ENCODE measurements at regions of chr11 and their contacts with region 1.

Region 1: DNA sequence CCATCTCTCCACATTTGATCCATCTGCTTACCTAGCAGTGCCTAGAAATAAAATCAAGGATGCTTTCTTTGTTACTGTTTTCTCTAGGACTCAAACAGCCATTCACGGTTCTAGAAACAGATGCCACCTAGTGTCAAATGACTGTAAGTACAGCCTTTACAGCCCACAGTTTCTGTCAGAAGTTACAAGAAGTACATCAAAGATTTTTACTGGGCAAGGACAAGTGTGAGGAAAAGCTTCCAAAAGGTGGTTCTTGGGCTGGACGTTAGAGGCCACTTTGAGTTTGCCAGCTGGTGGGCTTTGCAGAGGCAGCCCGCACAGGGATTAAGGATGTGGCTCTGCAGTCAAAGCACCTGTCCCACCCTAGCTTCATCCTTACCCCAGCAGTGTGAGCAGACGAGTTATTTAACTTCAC is 6.9 kb downstream of the KMT5B start:
- DNase-seq: no peak
- H3K4me3 ChIP-seq: no peak overlapping the region
- H3K27ac ChIP-seq: peak overlapping the region in 3 of 4 donors; percentile 23 to 57 (median 51)
- H3K4me1 ChIP-seq: peaks cover 55 to 95% (median 87%) of the 10 kb centered on the region in 4 donors
- H3K27me3 ChIP-seq: no peaks in the 10 kb centered on the region
- CTCF ChIP-seq: peak; percentile 81 to 87 (median 82)
- EP300 ChIP-seq: no peak
- POLR2A ChIP-seq: no peak

Region 2: DNA sequence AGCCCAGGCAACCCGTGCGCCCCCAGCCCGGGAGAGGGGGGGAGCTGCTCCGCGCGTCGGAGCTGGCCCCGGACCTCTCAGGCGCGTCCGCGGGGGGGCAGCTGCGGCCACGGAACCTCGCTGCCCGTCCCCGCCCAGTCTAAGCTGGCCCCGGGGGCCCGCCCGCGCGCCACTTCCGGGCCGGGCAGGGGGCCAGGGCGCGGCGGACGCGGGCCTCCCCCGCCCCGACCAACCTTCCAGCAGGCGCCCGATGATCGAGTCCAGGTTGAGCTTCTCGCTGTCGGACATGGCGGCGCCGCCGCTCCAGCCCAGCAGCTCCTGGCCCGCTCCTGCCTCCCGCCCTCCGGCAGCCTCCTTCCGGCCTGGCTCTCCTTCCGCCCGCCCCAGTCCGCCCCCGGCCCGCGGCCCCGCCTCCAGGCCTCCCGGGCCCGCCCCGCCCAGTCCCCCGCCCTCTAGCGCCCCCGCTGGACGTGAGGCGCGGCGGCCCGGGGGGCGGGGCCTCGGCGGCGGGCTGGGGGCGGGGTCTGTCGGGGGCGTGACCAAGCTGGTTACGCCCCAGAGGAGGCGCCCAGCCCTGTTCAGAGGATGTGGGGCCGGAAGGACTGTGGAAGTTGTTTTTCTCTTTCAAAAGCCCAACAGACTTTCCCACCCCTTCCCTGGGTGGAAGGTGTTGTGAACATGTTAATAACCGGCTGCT is 804.6 kb before region 1 on chr11 and contains the start of gene PPP1CA:
- intact Hi-C with region 1: no loop called
- DNase-seq: peak; percentile 97
- H3K4me3 ChIP-seq: peak within 1 kb of the TSS; percentile 80 to 92 (median 88)
- H3K27ac ChIP-seq: peak within 1 kb of the TSS; percentile 93 to 98 (median 94)
- H3K4me1 ChIP-seq: peaks cover 23 to 52% (median 43%) of the 10 kb centered on the region in 4 donors
- H3K27me3 ChIP-seq: peaks cover 0 to 37% (median 0%) of the 10 kb centered on the region in 4 donors
- CTCF ChIP-seq: peak; percentile 29 to 74 (median 37)
- EP300 ChIP-seq: no peak
- POLR2A ChIP-seq: no peak
- total RNA-seq, gene PPP1CA: 56.9 to 87.3 (median 78.7) TPM

Region 3: GRCh38 chr11:68127714-68128681 is 78.2 kb before region 1 on chr11:
- intact Hi-C with region 1: loop called (anchors 5 kb)
- DNase-seq: no peak
- H3K4me3 ChIP-seq: peak overlapping the region; percentile 60 to 69 (median 64)
- H3K27ac ChIP-seq: peak overlapping the region; percentile 83 to 88 (median 86)
- H3K4me1 ChIP-seq: peaks cover 17 to 29% (median 24%) of the 10 kb centered on the region in 4 donors
- H3K27me3 ChIP-seq: no peaks in the 10 kb centered on the region
- CTCF ChIP-seq: no peak
- EP300 ChIP-seq: no peak
- POLR2A ChIP-seq: no peak

Region 4: GRCh38 chr11:68242616-68243015 is 36.4 kb after region 1 on chr11:
- intact Hi-C with region 1: no loop called
- DNase-seq: no peak
- H3K4me3 ChIP-seq: no peak overlapping the region
- H3K27ac ChIP-seq: no peak overlapping the region
- H3K4me1 ChIP-seq: no peaks in the 10 kb centered on the region
- H3K27me3 ChIP-seq: peaks cover 0 to 3% (median 0%) of the 10 kb centered on the region in 4 donors
- CTCF ChIP-seq: no peak
- EP300 ChIP-seq: no peak
- POLR2A ChIP-seq: no peak

Region 5: GRCh38 chr11:68282141-68282970 is 76.2 kb after region 1 on chr11:
- intact Hi-C with region 1: no loop called
- DNase-seq: no peak
- H3K4me3 ChIP-seq: no peak overlapping the region
- H3K27ac ChIP-seq: no peak overlapping the region
- H3K4me1 ChIP-seq: no peaks in the 10 kb centered on the region
- H3K27me3 ChIP-seq: no peaks in the 10 kb centered on the region
- CTCF ChIP-seq: no peak
- EP300 ChIP-seq: no peak
- POLR2A ChIP-seq: no peak

Region 6: DNA sequence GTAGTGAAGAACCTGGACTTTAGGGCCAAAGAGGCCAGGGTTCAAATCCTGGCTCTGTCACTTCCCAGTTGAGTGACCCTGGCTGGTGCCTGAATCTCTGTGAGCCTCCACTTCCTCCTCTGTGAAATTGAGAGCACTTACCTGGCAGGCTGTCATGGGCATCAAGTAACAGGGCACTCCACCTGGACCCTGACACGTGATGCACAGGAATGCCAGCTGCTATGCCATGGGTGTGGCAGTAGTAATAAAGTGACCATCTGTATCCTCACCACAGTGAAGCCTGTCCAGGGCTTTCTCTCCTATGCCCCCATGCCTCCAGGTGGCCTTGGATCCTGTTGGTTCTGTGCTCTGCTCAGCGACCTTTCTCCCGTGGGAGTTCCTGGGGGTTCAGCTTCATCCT is 224.6 kb after region 1 on chr11:
- intact Hi-C with region 1: no loop called
- DNase-seq: no peak
- H3K4me3 ChIP-seq: no peak overlapping the region
- H3K27ac ChIP-seq: no peak overlapping the region
- H3K4me1 ChIP-seq: peaks cover 0 to 14% (median 0%) of the 10 kb centered on the region in 4 donors
- H3K27me3 ChIP-seq: no peaks in the 10 kb centered on the region
- CTCF ChIP-seq: no peak
- EP300 ChIP-seq: no peak
- POLR2A ChIP-seq: no peak